GM12878 (cell line): ENCODE measurements at regions of chrX and their contacts with region 1.

Region 1: DNA sequence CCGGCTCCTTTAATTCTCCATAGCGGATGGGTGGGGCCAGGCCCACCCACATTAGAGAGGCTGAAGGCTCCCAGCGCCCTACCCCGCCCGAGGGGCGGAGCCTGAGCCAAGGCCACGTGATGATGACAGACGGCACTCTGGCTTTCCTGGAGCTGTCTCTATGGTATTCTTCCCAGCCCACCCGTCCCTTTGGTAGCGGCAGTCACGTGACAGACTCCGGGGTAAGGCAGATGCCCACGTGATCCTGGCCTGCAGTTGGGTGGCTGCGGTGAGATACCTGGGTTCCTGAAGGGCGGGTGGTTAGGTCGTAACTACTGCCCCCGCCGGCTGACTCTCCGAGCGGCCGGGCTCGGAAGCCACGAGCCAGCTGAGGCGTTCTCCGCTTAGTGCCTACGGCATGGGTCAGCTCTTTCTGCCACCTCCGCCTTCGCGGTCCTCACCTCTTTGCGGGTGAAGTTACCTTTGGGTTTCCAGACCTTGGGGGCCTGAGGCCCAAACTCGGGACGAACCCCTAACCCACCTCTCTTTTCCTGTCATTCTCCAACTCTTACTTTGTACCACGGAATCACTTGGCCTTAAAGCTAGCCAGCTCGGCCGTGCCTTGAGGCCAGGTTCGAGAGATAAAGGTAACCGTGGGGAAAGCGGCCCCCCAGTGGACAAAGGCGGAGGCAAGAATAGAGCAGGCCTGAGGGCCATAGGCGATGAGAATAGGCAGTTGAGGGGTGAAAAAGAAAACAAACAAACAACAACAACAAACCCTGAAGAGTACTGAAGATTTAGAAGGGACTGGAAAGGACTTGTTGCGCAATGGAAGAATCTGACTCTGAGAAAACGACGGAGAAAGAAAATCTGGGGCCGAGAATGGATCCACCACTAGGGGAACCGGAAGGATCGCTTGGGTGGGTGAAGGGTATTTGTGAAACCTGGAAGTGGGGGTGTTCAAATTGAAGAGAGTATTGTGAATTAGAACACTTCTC is at the start of gene RRAGB:
- DNase-seq: peak; percentile 90
- ATAC-seq: peak; percentile 96
- H3K4me3 ChIP-seq: peak within 1 kb of the TSS; percentile 63
- H3K27ac ChIP-seq: peak within 1 kb of the TSS; percentile 84
- H3K4me1 ChIP-seq: no peaks in the 10 kb centered on the region
- H3K27me3 ChIP-seq: no peaks in the 10 kb centered on the region
- CTCF ChIP-seq: peak; percentile 42 to 65 (median 52); a peak in 5 of 6 replicates
- EP300 ChIP-seq: no peak
- POLR2A ChIP-seq: peak; percentile 80
- RAD21 ChIP-seq: peak; percentile 56
- polyA plus RNA-seq, gene RRAGB: 9.2 to 12.4 TPM

Region 2: DNA sequence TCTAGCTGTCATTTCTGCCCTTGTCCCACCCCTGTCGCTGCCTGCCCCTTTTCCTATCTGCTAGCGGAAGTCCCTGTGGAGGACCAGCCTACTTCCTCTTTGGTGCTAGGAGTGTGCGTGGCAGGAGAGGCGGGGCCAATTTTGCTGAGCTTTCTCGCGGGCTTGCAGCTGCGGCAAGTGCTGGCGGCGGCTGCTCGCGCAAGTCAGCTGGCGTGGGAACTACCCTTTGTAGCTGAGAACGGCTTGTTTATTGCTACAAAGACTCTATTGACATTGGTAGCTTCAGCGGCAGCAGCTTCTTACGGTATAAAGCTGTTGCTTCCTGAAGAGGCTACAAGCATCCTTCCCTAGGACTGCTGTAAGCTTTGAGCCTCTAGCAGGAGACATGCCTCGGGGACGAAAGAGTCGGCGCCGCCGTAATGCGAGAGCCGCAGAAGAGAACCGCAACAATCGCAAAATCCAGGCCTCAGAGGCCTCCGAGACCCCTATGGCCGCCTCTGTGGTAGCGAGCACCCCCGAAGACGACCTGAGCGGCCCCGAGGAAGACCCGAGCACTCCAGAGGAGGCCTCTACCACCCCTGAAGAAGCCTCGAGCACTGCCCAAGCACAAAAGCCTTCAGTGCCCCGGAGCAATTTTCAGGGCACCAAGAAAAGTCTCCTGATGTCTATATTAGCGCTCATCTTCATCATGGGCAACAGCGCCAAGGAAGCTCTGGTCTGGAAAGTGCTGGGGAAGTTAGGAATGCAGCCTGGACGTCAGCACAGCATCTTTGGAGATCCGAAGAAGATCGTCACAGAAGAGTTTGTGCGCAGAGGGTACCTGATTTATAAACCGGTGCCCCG is 265.6 kb before region 1 on chrX and contains the start of gene MAGEH1:
- CTCF ChIA-PET with region 1: interaction called, 3 read pairs
- POLR2A ChIA-PET with region 1: interaction called, 4 read pairs
- RAD21 ChIA-PET with region 1: no interaction called
- SMC1A ChIA-PET with region 1: interaction called, 6 read pairs
- in situ Hi-C with region 1: loop called (anchors 10 kb)
- intact Hi-C with region 1: no loop called
- DNase-seq: peak; percentile 55
- ATAC-seq: peak; percentile 98
- H3K4me3 ChIP-seq: peak within 1 kb of the TSS; percentile 84
- H3K27ac ChIP-seq: peak within 1 kb of the TSS; percentile 55
- H3K4me1 ChIP-seq: no peaks in the 10 kb centered on the region
- H3K27me3 ChIP-seq: no peaks in the 10 kb centered on the region
- CTCF ChIP-seq: no peak
- EP300 ChIP-seq: no peak
- POLR2A ChIP-seq: peak; percentile 83
- RAD21 ChIP-seq: no peak
- polyA plus RNA-seq, gene MAGEH1: 8.7 to 9.1 TPM

Region 3: DNA sequence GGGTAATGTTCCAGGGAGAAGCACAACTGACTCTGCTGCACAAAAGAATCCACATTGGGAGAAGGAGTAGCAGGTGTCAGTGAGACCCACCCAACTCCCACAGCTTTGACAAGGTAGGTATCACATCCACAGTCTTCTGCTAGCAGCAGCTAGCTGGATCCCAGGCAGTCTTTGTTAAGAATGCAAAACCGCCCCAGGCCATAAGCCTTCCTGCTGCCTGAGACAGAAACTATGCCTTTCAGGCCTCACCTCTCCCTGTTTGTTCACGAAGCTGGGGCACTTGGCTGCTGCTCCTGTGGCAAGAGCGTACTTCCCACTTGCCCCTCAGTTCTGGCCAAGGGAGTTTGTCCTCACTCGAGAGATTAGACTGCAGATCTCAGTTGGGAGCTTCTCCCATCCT is 21.2 kb after region 1 on chrX:
- CTCF ChIA-PET with region 1: interaction called, 13 read pairs
- POLR2A ChIA-PET with region 1: no interaction called
- RAD21 ChIA-PET with region 1: no interaction called
- SMC1A ChIA-PET with region 1: no interaction called
- in situ Hi-C with region 1: no loop called
- intact Hi-C with region 1: no loop called
- DNase-seq: no peak
- ATAC-seq: no peak
- H3K4me3 ChIP-seq: no peak overlapping the region
- H3K27ac ChIP-seq: no peak overlapping the region
- H3K4me1 ChIP-seq: no peaks in the 10 kb centered on the region
- H3K27me3 ChIP-seq: no peaks in the 10 kb centered on the region
- CTCF ChIP-seq: no peak
- EP300 ChIP-seq: no peak
- POLR2A ChIP-seq: no peak
- RAD21 ChIP-seq: no peak

Region 4: GRCh38 chrX:55794405-55794804 is 76.6 kb after region 1 on chrX:
- CTCF ChIA-PET with region 1: interaction called, 4 read pairs
- POLR2A ChIA-PET with region 1: no interaction called
- RAD21 ChIA-PET with region 1: no interaction called
- SMC1A ChIA-PET with region 1: interaction called, 3 read pairs
- in situ Hi-C with region 1: no loop called
- intact Hi-C with region 1: loop called (anchors 10 kb)
- DNase-seq: peak; percentile 73
- ATAC-seq: peak; percentile 99
- H3K4me3 ChIP-seq: no peak overlapping the region
- H3K27ac ChIP-seq: peak overlapping the region; percentile 38
- H3K4me1 ChIP-seq: no peaks in the 10 kb centered on the region
- H3K27me3 ChIP-seq: no peaks in the 10 kb centered on the region
- CTCF ChIP-seq: no peak
- EP300 ChIP-seq: no peak
- POLR2A ChIP-seq: no peak
- RAD21 ChIP-seq: no peak

Region 5: DNA sequence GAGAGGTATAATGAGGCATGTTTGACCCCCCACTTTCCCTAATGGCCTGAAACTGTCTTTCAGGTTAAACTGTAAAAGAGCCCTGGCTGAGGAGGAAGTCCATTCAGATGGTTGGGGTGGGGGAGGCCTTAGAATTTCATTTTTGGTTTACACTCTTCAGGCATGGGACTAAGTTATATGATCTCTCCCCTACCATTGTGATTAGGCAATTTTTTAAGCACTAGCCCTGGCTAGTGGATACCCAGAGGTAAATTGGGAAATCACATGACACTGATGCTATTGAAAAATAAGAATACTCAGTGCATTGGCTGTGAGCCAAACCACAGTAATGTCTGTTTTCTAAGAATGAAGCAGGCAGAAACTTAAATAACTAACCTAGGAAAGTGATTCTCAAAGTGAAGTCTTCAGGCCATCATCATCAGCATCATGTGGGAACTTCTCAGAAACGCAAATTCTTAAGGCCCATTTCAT is 149.4 kb after region 1 on chrX:
- CTCF ChIA-PET with region 1: no interaction called
- POLR2A ChIA-PET with region 1: no interaction called
- RAD21 ChIA-PET with region 1: no interaction called
- SMC1A ChIA-PET with region 1: interaction called, 3 read pairs
- in situ Hi-C with region 1: no loop called
- intact Hi-C with region 1: loop called (anchors 2 kb)
- DNase-seq: peak; percentile 86
- ATAC-seq: peak; percentile 93
- H3K4me3 ChIP-seq: no peak overlapping the region
- H3K27ac ChIP-seq: peak overlapping the region; percentile 57
- H3K4me1 ChIP-seq: peaks cover 8% of the 10 kb centered on the region
- H3K27me3 ChIP-seq: no peaks in the 10 kb centered on the region
- CTCF ChIP-seq: no peak
- EP300 ChIP-seq: no peak; a peak in 1 of 4 replicates
- POLR2A ChIP-seq: no peak
- RAD21 ChIP-seq: peak; percentile 32; the same call in 1 of the 2 replicates

Region 6: GRCh38 chrX:56232221-56233082 is 514.6 kb after region 1 on chrX and contains the start of gene KLF8:
- CTCF ChIA-PET with region 1: interaction called, 4 read pairs
- POLR2A ChIA-PET with region 1: no interaction called
- RAD21 ChIA-PET with region 1: interaction called, 5 read pairs
- SMC1A ChIA-PET with region 1: no interaction called
- in situ Hi-C with region 1: no loop called
- intact Hi-C with region 1: loop called (anchors 5 kb)
- DNase-seq: no peak
- ATAC-seq: peak; percentile 79
- H3K4me3 ChIP-seq: peak within 1 kb of the TSS; percentile 49
- H3K27ac ChIP-seq: peak within 1 kb of the TSS; percentile 25; the same call in 1 of the 2 replicates
- H3K4me1 ChIP-seq: no peaks in the 10 kb centered on the region
- H3K27me3 ChIP-seq: no peaks in the 10 kb centered on the region
- CTCF ChIP-seq: no peak
- EP300 ChIP-seq: no peak
- POLR2A ChIP-seq: no peak
- RAD21 ChIP-seq: no peak
- polyA plus RNA-seq, gene KLF8: 0.31 to 0.39 TPM